Activated CD8-positive, alpha-beta memory T cell treated with anti-CD3 and anti-CD28 coated beads, Interleukin-2, amount 10 ng/mL, durations not matched to agents 7 days and 5 days (primary cell): ENCODE measurements at regions of chr7 and their contacts with region 1.

Region 1: DNA sequence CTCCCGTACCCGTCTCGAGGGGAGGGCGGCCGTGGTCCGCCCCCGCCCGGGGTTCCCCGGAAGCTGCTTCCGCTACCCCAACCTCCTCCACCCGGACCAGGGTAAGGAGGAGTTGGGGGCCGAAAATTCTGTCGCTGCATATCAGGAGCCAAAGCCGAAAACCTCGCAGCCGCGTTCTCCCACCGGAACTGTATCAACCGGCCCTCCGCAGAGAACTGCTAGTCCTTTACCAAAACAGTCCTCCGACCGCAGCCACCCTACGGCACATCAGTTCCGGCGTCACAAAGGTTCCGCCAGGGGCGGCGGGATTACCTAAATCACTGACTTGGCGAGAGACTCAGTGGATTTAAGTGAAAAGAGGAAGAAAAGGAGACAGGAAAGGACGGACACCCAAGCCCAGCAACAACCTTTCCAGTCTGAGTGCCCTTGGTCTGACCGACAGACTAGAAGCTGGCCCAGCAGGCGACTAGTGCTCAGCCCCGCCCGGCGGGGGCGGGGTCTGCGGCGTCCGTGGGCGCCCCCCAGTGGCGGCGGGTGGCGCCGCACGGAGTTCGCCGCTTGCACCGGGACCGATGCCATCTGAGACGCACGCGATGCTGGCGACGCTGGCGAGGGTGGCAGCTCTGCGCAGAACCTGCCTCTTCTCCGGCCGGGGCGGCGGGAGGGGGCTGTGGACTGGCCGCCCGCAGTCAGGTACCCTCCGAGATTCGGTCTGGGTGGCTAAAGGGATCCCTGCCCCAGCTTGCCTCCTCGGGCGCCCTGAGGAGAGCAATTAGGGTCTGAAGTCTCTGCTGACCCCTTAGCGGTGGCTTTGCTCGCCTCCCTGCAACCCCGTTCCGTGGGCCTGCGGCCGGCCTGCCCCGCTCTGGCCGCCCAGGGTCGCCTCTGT is at the starts of genes MPLKIP and SUGCT:
- DNase-seq: peak; percentile 90
- ATAC-seq: peak; percentile 89
- H3K4me3 Mint-ChIP-seq: peak within 1 kb of the TSS; percentile 86
- H3K27ac Mint-ChIP-seq: peak within 1 kb of the TSS; percentile 91
- H3K4me1 Mint-ChIP-seq: peaks cover 26% of the 10 kb centered on the region
- H3K27me3 Mint-ChIP-seq: peaks cover 2% of the 10 kb centered on the region
- total RNA-seq, gene MPLKIP: 36.1 to 38.9 TPM
- total RNA-seq, gene SUGCT: 0.21 to 0.61 TPM

Region 2: DNA sequence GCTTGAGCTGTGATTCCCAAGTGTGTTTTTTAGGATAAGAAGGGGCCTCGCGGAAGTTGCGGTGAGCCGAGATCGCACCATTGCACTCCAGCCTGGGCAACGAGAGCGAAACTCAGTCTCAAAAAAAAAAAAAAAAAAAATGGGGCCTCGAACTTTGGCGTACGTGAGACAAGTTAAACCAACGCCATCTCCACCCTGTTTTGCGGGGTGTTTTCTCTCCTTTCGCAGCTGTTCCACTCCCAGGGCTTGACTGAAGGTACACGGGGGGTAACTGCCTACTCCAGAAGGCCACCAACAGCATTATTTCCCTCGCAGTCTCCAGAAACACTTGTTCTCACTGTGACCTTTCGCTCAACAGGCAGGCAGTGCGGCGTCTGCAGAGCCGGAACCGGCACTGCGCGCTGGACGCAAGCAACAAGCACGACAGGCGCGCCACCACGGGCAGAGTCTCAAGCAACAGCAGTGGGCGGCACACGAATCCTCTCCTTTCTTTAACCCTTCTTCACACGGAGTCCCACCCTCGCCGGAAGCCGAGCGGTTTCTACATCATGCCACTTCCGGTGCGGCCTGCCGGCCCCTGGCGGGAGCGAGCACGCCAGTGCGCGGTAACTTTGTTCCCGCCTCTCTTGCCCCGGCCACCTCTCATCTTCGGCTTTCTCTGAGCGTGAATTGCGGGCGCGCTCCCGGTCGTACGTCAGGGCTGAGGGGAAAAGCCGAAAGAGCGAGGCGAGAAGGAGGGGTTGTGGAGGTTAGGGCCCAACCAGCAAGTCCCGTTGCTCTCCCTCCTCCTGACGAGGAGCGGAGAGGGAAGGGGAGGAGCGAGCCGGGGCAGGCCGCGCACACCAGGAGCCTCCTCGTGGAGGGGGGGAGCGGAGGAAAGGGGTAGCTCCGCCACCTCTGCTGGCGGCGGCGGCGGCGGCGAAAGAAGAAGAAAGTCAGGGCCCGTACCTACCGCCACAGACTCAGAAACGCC is 185.4 kb before region 1 on chr7:
- CTCF ChIA-PET with region 1: interaction called, 11 read pairs
- DNase-seq: peak; percentile 98
- ATAC-seq: peak; percentile 75
- H3K4me3 Mint-ChIP-seq: peak overlapping the region; percentile 98
- H3K27ac Mint-ChIP-seq: peak overlapping the region; percentile 100
- H3K4me1 Mint-ChIP-seq: peaks cover 34% of the 10 kb centered on the region
- H3K27me3 Mint-ChIP-seq: peaks cover 4% of the 10 kb centered on the region